Esophagus muscularis mucosa (tissue), 4 donors: ENCODE measurements at regions of chr1 and their contacts with region 1.

Region 1: GRCh38 chr1:180954005-180954800 is 41.5 kb downstream of the KIAA1614 start:
- DNase-seq: no peak
- H3K4me3 ChIP-seq: peak overlapping the region; percentile 64 to 70 (median 70)
- H3K27ac ChIP-seq: peak overlapping the region; percentile 60 to 75 (median 73)
- H3K4me1 ChIP-seq: peaks cover 8 to 46% (median 22%) of the 10 kb centered on the region in 4 donors
- H3K27me3 ChIP-seq: no peaks in the 10 kb centered on the region
- CTCF ChIP-seq: peak; percentile 9 to 26 (median 23)
- EP300 ChIP-seq: no peak
- POLR2A ChIP-seq: no peak

Region 2: DNA sequence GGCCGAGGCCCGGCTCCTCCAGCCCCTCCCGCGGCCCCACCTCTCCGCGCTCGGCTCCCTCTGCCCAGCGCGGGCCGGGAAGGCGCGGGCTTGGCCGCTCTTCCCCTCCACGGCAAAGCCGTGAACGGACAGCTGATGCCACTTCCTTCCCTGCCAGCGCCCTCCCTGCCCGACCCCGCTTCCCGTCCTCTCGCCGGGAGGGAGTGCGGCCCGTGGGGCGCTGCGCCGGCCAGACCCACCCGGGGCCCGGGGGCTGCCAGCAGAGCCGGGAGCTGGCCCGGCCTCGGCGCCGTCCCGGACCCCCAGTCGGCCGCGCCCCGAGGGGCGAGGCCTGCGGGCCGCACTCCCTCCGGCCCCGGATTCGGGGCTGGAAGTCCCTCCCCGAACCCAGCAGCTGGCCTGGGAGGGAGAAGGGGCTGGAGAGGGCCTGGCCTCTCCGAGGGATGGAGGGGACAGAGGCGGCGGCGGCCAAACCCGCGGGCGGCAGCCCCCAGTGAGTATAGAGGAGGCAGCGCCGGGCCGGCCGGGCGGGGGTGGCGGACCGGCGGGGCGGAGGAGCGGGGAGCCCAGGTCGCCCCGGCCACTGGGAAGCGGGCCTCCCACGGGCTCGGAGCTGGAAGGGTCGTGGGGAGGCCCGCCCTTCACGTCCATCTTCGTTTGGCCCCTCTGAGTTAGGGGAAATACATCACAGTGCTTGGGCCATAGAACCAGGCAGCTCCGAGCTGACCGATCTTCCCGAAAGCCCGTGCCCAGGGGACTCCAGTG is 41.2 kb before region 1 on chr1 and contains the start of gene KIAA1614:
- intact Hi-C with region 1: loop called (anchors 5 kb)
- DNase-seq: no peak
- H3K4me3 ChIP-seq: peak within 1 kb of the TSS; percentile 69 to 89 (median 76)
- H3K27ac ChIP-seq: peak within 1 kb of the TSS; percentile 88 to 96 (median 94)
- H3K4me1 ChIP-seq: peaks cover 11 to 52% (median 44%) of the 10 kb centered on the region in 4 donors
- H3K27me3 ChIP-seq: no peaks in the 10 kb centered on the region
- CTCF ChIP-seq: no peak
- EP300 ChIP-seq: no peak
- POLR2A ChIP-seq: no peak
- total RNA-seq, gene KIAA1614: 15.4 to 30.0 (median 17.4) TPM

Region 3: GRCh38 chr1:180935326-180936109 is 18.7 kb before region 1 on chr1:
- intact Hi-C with region 1: no loop called
- DNase-seq: no peak
- H3K4me3 ChIP-seq: no peak overlapping the region
- H3K27ac ChIP-seq: no peak overlapping the region
- H3K4me1 ChIP-seq: no peaks in the 10 kb centered on the region
- H3K27me3 ChIP-seq: no peaks in the 10 kb centered on the region
- CTCF ChIP-seq: no peak
- EP300 ChIP-seq: no peak
- POLR2A ChIP-seq: no peak

Region 4: GRCh38 chr1:181014477-181015250 is 60.5 kb after region 1 on chr1:
- intact Hi-C with region 1: loop called (anchors 10 kb)
- DNase-seq: no peak
- H3K4me3 ChIP-seq: no peak overlapping the region
- H3K27ac ChIP-seq: no peak overlapping the region
- H3K4me1 ChIP-seq: peaks cover 19 to 68% (median 57%) of the 10 kb centered on the region in 4 donors
- H3K27me3 ChIP-seq: no peaks in the 10 kb centered on the region
- CTCF ChIP-seq: no peak
- EP300 ChIP-seq: no peak
- POLR2A ChIP-seq: no peak

Region 5: DNA sequence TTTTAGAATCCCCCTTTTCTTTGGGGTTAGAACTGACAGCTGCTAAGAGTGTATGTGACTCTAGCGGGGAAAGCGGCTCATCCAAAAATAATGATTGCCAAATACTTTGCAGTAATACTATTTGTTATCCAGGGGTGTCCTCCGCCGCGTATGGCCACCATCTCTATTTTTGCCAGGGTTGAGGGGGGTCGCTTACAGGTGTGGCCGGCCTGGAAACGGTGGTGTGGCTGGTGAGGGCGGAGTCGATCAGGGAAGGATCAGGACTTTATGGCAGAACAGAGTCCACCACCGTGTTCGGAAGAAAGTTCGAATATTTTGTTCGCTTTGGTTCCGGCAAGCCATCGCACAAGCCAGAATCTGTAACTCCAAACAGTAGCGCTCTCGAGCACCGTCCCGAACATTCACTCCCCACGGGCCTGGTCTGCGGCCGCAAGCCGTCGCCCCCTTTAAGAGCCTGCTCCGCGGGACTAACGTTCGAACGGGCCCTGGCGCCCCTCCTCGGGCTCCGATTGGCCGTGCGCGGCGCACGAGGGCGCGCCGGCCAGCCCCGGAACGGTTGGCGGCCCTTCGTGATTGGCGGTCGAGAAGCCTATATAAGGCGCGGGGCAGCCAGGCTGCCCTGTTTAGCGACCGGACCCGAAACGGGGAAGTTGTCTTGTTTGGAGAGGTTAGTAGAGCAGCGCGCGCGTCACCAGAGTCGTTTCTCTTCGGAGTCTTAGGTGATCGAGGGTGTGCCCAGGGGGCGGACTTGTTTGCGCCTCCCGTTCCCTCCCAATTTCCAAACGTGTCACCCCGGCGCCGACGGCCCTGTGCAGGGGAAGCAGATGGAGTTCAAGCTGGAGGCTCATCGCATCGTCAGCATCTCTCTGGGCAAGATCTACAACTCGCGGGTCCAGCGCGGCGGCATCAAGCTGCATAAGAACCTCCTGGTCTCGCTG is 134.1 kb after region 1 on chr1 and contains the start of gene IER5:
- intact Hi-C with region 1: no loop called
- DNase-seq: peak; percentile 99
- H3K4me3 ChIP-seq: peak within 1 kb of the TSS; percentile 81 to 98 (median 90)
- H3K27ac ChIP-seq: peak within 1 kb of the TSS; percentile 93 to 98 (median 98)
- H3K4me1 ChIP-seq: peaks cover 35 to 39% (median 37%) of the 10 kb centered on the region in 4 donors
- H3K27me3 ChIP-seq: no peaks in the 10 kb centered on the region
- CTCF ChIP-seq: no peak
- EP300 ChIP-seq: no peak
- POLR2A ChIP-seq: peak; percentile 99
- total RNA-seq, gene IER5: 14.5 to 22.0 (median 16.7) TPM